ENCODE measurements at regions of chr1 and their contacts with region 1.

Region 1: DNA sequence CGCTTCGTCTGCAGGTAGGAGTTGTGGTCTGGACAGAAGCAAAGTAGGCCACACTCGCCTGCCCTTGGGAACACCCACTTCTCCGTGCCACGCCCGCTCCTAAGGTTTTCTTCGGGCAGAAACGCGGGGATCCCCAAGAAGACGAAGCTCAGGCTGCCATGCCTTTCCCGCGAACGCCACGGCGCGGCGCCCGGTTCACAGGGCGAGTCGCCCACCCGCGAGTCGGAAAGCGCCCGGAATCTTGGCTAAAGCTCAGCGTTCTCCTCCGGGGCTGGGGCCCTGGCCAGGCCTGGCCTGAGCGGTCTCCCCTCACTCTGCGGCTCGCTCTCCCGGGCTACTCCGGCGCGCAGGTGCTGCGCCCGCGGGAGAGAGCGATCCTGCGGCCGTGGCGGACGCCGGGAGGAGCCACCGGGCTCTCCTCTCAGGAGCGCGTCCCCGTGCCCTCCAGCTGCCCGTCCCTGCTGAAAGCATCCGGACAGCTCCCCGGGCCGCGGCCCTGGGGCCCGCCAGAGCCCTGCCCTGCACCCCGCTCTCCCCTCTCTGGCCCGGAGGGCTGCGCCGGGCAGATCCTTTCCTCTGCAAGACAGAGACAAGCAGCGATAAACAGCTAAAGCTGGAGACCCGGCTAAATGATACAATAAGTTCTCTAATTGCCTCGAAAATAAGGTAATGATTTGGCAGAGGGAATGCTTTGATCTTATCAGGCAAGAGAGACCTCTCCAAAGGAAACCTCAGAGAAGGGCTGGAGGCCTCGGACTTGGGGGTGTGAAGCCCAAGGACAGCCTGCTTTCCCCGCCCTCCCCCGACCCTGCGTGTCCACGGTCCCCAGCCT is 6.7 kb upstream of the WNT2B start:
- DNase-seq: peak; percentile 49 to 67 (median 59)
- H3K4me3 ChIP-seq: peak overlapping the region; percentile 37 to 78 (median 62)
- H3K27ac ChIP-seq: no peak overlapping the region
- H3K4me1 ChIP-seq: peaks cover 0 to 10% (median 8%) of the 10 kb centered on the region in 4 experiments
- H3K27me3 ChIP-seq: peaks cover 9 to 70% (median 33%) of the 10 kb centered on the region in 5 experiments

Region 2: DNA sequence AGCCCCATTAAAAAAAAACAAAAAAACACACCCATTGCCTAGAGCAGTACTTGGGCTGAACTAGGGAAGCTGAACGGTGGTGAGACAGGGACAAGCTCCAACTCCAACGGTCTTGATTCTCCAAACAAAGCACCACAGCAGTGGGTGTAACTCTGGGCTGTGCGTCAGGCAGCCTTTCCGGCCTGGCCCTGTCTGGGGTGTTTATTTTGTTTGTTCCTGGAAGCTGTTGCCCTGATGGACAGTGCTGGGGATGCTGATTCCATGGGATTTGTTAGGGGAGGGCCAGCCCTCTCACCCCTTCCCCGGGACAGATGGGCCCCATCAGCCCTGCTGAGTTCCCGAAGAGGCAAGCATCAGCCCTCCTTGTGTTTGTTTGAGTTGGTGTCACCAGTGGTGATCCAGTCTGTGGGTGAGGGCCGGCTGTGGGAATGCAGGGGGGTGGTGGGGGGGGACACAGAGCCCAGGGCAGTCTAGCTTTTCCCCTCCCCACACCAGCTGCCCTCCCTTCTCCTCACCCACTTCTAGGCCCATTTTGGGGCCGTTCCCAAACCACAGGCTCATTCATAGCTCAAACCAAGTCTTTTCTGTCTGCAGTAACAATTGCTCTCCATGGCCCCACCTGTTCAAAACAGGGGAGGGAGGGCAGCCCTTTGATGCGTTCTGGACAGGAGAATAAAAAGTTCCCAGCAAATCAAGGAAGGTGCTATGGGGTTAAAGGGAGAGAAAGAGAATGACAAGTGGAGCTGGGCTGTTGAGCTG is 11.3 kb after region 1 on chr1:
- CTCF ChIA-PET with region 1: interaction called, 19 read pairs
- POLR2A ChIA-PET with region 1: no interaction called
- DNase-seq: no peak
- H3K4me3 ChIP-seq: no peak overlapping the region
- H3K27ac ChIP-seq: no peak overlapping the region
- H3K4me1 ChIP-seq: peaks cover 0 to 12% (median 9%) of the 10 kb centered on the region in 4 experiments
- H3K27me3 ChIP-seq: peaks cover 0 to 38% (median 26%) of the 10 kb centered on the region in 5 experiments

Region 3: GRCh38 chr1:112614460-112615065 is 112.5 kb after region 1 on chr1:
- CTCF ChIA-PET with region 1: interaction called, 14 read pairs
- POLR2A ChIA-PET with region 1: no interaction called
- DNase-seq: peak; percentile 52 to 73 (median 71)
- H3K4me3 ChIP-seq: no peak overlapping the region
- H3K27ac ChIP-seq: no peak overlapping the region
- H3K4me1 ChIP-seq: peaks cover 7 to 16% (median 8%) of the 10 kb centered on the region in 4 experiments
- H3K27me3 ChIP-seq: no peaks in the 10 kb centered on the region

Region 4: DNA sequence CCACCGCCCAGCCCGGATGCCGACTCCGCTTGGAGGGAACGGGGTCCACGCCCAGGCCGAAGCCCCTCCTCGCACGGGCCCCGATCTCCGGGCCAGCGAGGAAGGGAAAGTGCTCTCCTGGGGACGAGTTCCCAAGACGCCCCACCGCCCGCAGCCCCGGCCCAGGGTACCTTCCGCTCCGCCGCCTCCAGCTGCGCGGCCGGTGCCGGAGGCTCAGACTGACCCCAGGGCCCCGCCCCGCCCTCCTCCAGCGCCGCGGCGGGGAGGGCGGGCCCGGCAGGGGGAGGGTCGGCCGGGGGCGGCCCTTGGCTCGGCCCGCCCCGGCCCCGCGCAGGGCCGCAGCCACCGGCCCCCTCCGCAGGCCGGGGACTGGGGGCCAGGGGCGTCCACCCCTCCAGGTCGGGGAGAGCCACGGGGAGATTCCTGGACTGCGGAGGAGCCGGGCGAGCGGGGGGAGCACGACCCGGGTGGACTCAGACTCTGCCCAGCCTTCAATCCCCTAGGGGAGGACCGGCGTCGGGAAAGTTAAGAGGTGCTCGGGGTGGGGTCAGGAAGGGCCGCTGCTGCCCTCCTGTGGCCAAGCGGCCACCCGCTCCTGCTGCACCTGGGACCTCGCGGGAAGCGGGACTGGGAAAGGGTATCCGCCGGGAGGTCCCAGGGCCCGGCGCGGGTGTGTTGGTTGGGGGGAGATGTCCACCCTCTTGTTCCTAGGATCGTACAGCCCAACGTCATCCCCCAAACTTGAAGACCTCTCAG is 205.1 kb after region 1 on chr1 and contains the start of gene RHOC:
- CTCF ChIA-PET with region 1: interaction called, 21 read pairs
- POLR2A ChIA-PET with region 1: interaction called, 4 read pairs
- DNase-seq: peak; percentile 56 to 75 (median 57)
- H3K4me3 ChIP-seq: peak within 1 kb of the TSS; percentile 54 to 86 (median 76)
- H3K27ac ChIP-seq: peak within 1 kb of the TSS in 1 of 2 experiments; percentile 76
- H3K4me1 ChIP-seq: peaks cover 6 to 42% (median 33%) of the 10 kb centered on the region in 4 experiments
- H3K27me3 ChIP-seq: peaks cover 0 to 4% (median 2%) of the 10 kb centered on the region in 5 experiments

Measured in common myeloid progenitor, CD34-positive (primary cell).